Activated naive CD4-positive, alpha-beta T cell treated with anti-CD3 and anti-CD28 coated beads for 36 hours (primary cell): ENCODE measurements at regions of chr5 and their contacts with region 1.

Region 1: GRCh38 chr5:35672995-35673394 is 55.3 kb downstream of the SPEF2 start:
- DNase-seq: peak; percentile 73
- H3K4me3 Mint-ChIP-seq: no peak overlapping the region
- H3K27ac Mint-ChIP-seq: peak overlapping the region; percentile 75
- H3K4me1 Mint-ChIP-seq: peaks cover 63% of the 10 kb centered on the region
- H3K27me3 Mint-ChIP-seq: no peaks in the 10 kb centered on the region

Region 2: DNA sequence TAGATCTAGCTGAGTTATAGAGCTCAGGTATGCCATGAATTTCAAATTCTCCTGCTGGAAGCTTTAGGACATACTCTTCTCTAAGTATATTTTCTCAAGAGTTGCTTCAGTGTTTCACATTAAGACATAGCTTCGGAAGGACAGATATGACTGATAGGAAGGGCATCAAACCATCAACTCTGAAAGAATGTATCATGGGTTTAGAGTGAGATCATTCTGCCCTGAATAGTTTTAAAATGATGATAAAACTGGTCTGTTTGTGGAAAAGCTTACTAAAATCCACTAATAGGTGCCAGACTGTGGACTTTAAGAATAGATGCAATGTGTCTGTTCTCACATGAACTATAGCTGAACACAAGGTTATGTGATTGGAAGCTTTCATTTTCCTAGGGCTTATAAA is 46.9 kb before region 1 on chr5:
- CTCF ChIA-PET with region 1: no interaction called
- intact Hi-C with region 1: no loop called
- DNase-seq: no peak
- H3K4me3 Mint-ChIP-seq: no peak overlapping the region
- H3K27ac Mint-ChIP-seq: no peak overlapping the region
- H3K4me1 Mint-ChIP-seq: peaks cover 26% of the 10 kb centered on the region
- H3K27me3 Mint-ChIP-seq: no peaks in the 10 kb centered on the region

Region 3: GRCh38 chr5:35736280-35736679 is 63.3 kb after region 1 on chr5:
- CTCF ChIA-PET with region 1: no interaction called
- intact Hi-C with region 1: loop called (anchors 1 kb)
- DNase-seq: peak; percentile 83
- H3K4me3 Mint-ChIP-seq: no peak overlapping the region
- H3K27ac Mint-ChIP-seq: peak overlapping the region; percentile 73
- H3K4me1 Mint-ChIP-seq: peaks cover 58% of the 10 kb centered on the region
- H3K27me3 Mint-ChIP-seq: no peaks in the 10 kb centered on the region

Region 4: DNA sequence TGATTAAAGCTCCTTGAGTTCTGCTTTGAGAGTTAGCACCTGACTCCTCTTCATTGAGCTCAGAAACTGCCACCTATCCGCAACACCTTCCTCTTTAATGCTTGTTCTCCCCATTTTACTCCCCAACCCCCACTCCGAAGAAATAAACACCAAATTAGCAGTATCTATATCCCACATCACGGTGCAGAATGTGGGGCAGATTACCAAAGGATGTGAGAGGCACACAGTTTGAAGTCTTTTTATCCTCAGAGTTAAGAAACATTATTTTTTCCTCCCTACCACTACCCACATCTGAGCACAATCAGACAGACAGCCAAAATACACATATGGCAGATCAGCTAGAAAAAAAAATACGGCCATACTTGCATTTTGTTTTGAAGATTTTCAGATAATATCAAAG is 157.6 kb after region 1 on chr5:
- CTCF ChIA-PET with region 1: no interaction called
- intact Hi-C with region 1: no loop called
- DNase-seq: no peak
- H3K4me3 Mint-ChIP-seq: peak overlapping the region; percentile 5
- H3K27ac Mint-ChIP-seq: peak overlapping the region; percentile 95
- H3K4me1 Mint-ChIP-seq: peaks cover 96% of the 10 kb centered on the region
- H3K27me3 Mint-ChIP-seq: no peaks in the 10 kb centered on the region